Activated CD4-positive, alpha-beta memory T cell treated with anti-CD3 and anti-CD28 coated beads for 36 hours (primary cell): ENCODE measurements at regions of chr3 and their contacts with region 1.

Region 1: GRCh38 chr3:141553055-141553454 is 66.2 kb downstream of the RASA2 start:
- DNase-seq: no peak
- H3K4me3 Mint-ChIP-seq: peak overlapping the region; percentile 2
- H3K27ac Mint-ChIP-seq: peak overlapping the region; percentile 84
- H3K4me1 Mint-ChIP-seq: peaks cover 59% of the 10 kb centered on the region
- H3K27me3 Mint-ChIP-seq: no peaks in the 10 kb centered on the region

Region 2: GRCh38 chr3:141370065-141370533 is 183.0 kb before region 1 on chr3:
- CTCF ChIA-PET with region 1: interaction called, 3 read pairs
- POLR2A ChIA-PET with region 1: no interaction called
- intact Hi-C with region 1: loop called (anchors 2 kb)
- DNase-seq: peak; percentile 68
- H3K4me3 Mint-ChIP-seq: no peak overlapping the region
- H3K27ac Mint-ChIP-seq: peak overlapping the region; percentile 40
- H3K4me1 Mint-ChIP-seq: peaks cover 58% of the 10 kb centered on the region
- H3K27me3 Mint-ChIP-seq: no peaks in the 10 kb centered on the region

Region 3: DNA sequence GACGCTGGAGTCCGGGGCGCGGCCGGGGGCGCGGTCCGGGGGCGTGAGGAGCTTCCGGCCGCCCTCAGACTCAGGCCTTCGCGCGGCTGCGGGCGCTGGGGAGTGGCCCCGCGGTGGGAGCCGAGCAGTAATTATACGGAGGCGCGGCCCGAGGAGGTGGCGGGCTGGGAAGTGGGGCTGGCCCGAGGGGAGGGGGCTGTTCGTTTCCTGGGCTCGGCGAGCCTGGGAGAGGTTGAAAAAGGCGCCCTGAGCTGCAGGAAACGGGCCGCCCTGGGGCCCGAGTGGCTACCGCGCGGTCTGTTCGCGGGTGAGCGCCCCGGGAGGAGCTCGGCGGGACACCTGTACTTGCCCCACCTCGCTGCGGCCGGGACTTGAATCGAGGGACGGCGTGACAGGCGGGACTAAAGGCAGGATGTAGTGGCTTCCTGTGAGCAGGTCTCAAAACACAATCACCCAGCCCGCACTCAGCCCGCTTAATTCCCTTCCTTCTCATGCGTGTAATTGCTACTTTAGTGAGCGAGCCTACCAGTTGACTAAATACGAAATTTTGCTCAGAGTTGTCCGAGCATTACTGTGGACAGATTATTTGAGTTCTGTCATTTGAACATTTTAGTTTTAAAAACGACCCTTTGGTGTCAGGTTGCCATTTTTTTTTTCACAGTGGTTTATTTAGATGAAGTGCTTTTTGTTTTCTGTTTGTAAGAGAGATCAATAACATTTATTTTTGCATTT is 65.4 kb before region 1 on chr3:
- CTCF ChIA-PET with region 1: interaction called, 34 read pairs
- POLR2A ChIA-PET with region 1: interaction called, 61 read pairs
- intact Hi-C with region 1: loop called (anchors 1 kb)
- DNase-seq: peak; percentile 94
- H3K4me3 Mint-ChIP-seq: peak overlapping the region; percentile 84
- H3K27ac Mint-ChIP-seq: peak overlapping the region; percentile 94
- H3K4me1 Mint-ChIP-seq: peaks cover 67% of the 10 kb centered on the region
- H3K27me3 Mint-ChIP-seq: no peaks in the 10 kb centered on the region

Region 4: DNA sequence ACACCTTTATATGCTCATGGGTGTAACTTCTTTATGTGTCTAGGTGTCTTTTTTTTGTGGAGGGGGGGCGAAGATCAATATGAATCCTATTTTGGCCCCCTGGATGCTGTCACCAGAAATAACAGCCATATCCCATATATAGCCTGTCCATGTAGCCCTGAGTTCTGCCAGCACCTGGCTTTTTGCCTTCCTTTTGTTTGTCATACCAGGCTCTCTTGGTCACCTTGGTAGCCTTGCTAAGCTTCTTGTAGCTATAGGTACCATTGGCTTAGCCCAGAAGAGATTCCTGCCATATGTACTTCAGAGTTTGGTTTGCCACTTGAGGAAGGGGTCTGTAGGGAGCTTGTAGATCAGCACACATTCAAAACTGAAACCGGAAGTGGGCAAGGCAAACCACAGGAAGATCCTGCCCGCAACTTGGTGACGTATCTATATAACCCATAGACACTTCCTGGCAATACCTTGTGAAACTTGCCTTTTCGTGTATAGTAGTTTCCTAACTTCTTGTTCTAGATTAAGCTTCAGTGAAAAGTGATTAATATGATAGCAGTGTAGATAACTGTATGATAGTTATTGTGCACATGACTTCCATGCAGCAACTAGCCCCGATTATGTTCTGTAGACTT is 54.3 kb before region 1 on chr3:
- CTCF ChIA-PET with region 1: interaction called, 14 read pairs
- POLR2A ChIA-PET with region 1: interaction called, 51 read pairs
- intact Hi-C with region 1: loop called (anchors 1 kb)
- DNase-seq: peak; percentile 94
- H3K4me3 Mint-ChIP-seq: peak overlapping the region; percentile 35
- H3K27ac Mint-ChIP-seq: peak overlapping the region; percentile 90
- H3K4me1 Mint-ChIP-seq: peaks cover 68% of the 10 kb centered on the region
- H3K27me3 Mint-ChIP-seq: no peaks in the 10 kb centered on the region

Region 5: DNA sequence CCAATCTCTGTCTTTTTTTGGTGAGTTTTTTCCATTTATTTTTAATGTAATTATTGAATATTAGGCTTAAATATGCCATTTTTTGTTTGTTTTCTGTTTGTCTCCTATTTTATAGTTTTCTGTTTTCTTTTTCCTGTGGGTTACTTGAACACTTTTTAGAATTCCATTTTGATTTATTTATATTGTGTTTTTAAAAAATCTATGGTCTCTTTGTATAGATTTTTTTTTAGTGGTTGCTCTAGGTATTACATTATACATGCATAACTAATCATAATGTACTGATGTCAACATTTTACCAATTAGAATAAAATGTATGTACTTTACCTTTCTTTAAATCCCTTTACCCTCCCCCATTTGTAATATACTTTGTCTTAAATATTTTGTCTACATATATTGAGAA is 10.1 kb before region 1 on chr3:
- CTCF ChIA-PET with region 1: interaction called, 7 read pairs
- POLR2A ChIA-PET with region 1: interaction called, 28 read pairs
- intact Hi-C with region 1: loop called (anchors 1 kb)
- DNase-seq: no peak
- H3K4me3 Mint-ChIP-seq: no peak overlapping the region
- H3K27ac Mint-ChIP-seq: peak overlapping the region; percentile 74
- H3K4me1 Mint-ChIP-seq: peaks cover 78% of the 10 kb centered on the region
- H3K27me3 Mint-ChIP-seq: no peaks in the 10 kb centered on the region

Region 6: GRCh38 chr3:141680620-141681389 is 127.8 kb after region 1 on chr3:
- CTCF ChIA-PET with region 1: no interaction called
- POLR2A ChIA-PET with region 1: no interaction called
- intact Hi-C with region 1: no loop called
- DNase-seq: no peak
- H3K4me3 Mint-ChIP-seq: no peak overlapping the region
- H3K27ac Mint-ChIP-seq: no peak overlapping the region
- H3K4me1 Mint-ChIP-seq: peaks cover 12% of the 10 kb centered on the region
- H3K27me3 Mint-ChIP-seq: no peaks in the 10 kb centered on the region

Region 7: GRCh38 chr3:141754032-141754431 is 201.0 kb after region 1 on chr3:
- CTCF ChIA-PET with region 1: no interaction called
- POLR2A ChIA-PET with region 1: no interaction called
- intact Hi-C with region 1: no loop called
- DNase-seq: no peak
- H3K4me3 Mint-ChIP-seq: no peak overlapping the region
- H3K27ac Mint-ChIP-seq: no peak overlapping the region
- H3K4me1 Mint-ChIP-seq: no peaks in the 10 kb centered on the region
- H3K27me3 Mint-ChIP-seq: no peaks in the 10 kb centered on the region